Mammary epithelial cell (primary cell): ENCODE measurements at regions of chr2 and their contacts with region 1.

Region 1: DNA sequence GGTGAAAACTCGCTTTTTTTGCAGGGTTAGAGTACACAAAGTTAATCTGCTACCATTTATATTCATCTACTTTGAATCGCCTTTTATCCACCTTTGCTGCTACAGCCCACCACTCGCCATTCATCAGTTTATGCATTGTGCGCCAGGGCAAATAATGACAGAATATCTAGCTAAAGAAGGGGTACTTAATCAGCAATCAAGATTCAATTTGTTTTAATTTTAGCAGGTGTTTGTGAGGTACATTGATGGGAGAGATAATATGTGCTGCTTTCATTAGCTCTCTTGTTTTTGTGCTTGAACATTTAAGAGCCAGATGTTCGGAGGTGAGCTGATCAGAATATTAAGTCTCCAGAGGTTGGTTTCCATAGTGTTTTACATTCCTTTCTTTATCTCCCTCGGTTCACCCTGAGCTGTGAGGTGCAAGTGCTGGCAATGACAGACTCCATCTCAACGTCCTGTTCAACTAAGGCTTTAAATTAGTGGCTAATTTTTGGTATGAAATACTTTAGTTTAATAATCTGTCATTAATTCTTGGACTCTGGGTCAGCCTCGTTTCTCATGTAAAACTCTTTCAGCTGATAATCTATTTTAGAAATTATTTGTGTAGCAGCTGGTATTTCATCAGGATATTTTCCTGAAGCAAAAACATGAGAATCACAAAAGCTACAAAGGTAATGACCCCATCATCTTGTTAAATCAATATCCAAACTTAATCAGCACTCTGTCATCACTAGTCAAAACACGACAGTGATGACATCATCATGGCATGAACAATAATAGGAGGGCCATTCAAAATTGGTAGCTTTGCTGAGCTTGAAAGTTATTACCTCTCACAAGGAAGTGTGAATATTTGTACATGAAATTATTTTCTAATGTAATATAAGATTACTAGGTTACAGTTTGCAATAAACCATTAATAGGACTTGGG is 479.9 kb upstream of the FANCL start:
- DNase-seq: no peak
- H3K4me3 ChIP-seq: no peak overlapping the region
- H3K27ac ChIP-seq: no peak overlapping the region
- H3K4me1 ChIP-seq: no peaks in the 10 kb centered on the region
- H3K27me3 ChIP-seq: no peaks in the 10 kb centered on the region
- CTCF ChIP-seq: no peak

Region 2: DNA sequence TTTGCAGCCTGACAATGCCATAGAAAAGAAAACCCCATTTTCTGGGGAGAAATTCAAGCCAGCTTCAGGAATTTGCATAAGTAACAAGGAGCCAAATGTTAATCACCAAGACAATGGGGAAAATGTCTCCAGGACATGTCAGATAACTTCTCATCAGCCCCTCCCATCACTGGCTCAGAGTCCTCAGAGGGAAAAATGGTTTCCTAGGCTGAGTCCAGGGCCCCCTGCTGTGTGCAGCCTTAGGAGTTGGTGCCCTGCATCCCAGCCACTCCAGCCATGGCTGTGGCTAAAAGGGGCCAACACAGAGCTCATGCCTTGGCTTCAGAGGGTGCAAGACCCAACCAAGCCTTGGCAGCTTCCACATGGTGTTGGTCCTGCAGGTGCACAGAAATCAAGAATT is 416.2 kb before region 1 on chr2:
- CTCF ChIA-PET with region 1: no interaction called
- dilution Hi-C with region 1: no loop called
- in situ Hi-C with region 1: no loop called
- intact Hi-C with region 1: no loop called
- DNase-seq: no peak
- H3K4me3 ChIP-seq: no peak overlapping the region
- H3K27ac ChIP-seq: no peak overlapping the region
- H3K4me1 ChIP-seq: no peaks in the 10 kb centered on the region
- H3K27me3 ChIP-seq: no peaks in the 10 kb centered on the region
- CTCF ChIP-seq: no peak

Region 3: DNA sequence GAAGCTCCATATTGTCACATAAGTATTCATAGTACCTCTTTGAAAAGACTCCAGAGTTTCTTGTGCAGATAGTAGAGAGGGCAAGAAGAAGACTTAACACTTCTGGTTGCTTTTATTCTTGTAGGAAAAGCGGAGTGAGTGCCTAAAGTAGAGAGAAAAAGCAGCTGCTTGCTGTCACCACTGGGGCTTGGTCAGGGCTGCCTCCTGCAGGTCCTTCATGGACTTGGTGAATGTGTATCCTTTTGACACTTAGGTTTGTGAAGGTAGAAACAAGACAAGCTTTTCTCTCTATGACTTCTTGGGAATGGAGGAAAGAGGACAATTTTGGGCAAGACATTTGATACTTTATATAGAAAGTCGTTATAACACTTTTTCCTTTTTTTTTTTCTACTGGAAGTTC is 167.1 kb before region 1 on chr2:
- CTCF ChIA-PET with region 1: no interaction called
- dilution Hi-C with region 1: no loop called
- in situ Hi-C with region 1: no loop called
- intact Hi-C with region 1: no loop called
- DNase-seq: no peak
- H3K4me3 ChIP-seq: no peak overlapping the region
- H3K27ac ChIP-seq: no peak overlapping the region
- H3K4me1 ChIP-seq: no peaks in the 10 kb centered on the region
- H3K27me3 ChIP-seq: peaks cover 2% of the 10 kb centered on the region
- CTCF ChIP-seq: peak; percentile 14 to 49

Region 4: GRCh38 chr2:58669998-58670397 is 51.0 kb before region 1 on chr2:
- CTCF ChIA-PET with region 1: no interaction called
- dilution Hi-C with region 1: loop called (anchors 5 kb)
- in situ Hi-C with region 1: no loop called
- intact Hi-C with region 1: no loop called
- DNase-seq: no peak
- H3K4me3 ChIP-seq: no peak overlapping the region
- H3K27ac ChIP-seq: no peak overlapping the region
- H3K4me1 ChIP-seq: no peaks in the 10 kb centered on the region
- H3K27me3 ChIP-seq: no peaks in the 10 kb centered on the region
- CTCF ChIP-seq: no peak

Region 5: DNA sequence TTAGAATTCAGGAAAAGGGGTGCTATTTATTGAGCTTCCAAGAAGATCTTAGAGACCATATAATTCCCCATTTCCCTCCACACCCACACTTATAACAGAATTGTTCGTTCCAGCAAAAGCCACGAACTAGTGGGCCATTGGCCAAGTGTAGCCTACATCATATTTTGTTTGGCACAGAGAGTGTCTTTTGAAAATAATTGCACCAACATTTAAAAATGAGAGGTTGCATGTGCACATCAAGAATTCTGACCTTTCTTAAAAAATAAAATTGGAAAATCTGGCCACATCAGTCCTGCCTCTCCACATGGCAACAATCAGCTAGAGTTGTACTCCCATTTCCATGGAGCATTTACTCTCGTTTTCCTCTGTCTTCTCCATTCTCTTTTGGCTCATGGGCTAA is 175.6 kb after region 1 on chr2:
- CTCF ChIA-PET with region 1: no interaction called
- dilution Hi-C with region 1: no loop called
- in situ Hi-C with region 1: no loop called
- intact Hi-C with region 1: no loop called
- DNase-seq: no peak
- H3K4me3 ChIP-seq: no peak overlapping the region
- H3K27ac ChIP-seq: no peak overlapping the region
- H3K4me1 ChIP-seq: peaks cover 3% of the 10 kb centered on the region
- H3K27me3 ChIP-seq: no peaks in the 10 kb centered on the region
- CTCF ChIP-seq: no peak